ENCODE measurements at regions of chr7 and their contacts with region 1.

Region 1: GRCh38 chr7:144011458-144012230 is 11.5 kb downstream of the OR6B1 start:
- DNase-seq: peak; percentile 10
- H3K4me3 ChIP-seq: no peak overlapping the region
- CTCF ChIP-seq: peak; percentile 15

Region 2: DNA sequence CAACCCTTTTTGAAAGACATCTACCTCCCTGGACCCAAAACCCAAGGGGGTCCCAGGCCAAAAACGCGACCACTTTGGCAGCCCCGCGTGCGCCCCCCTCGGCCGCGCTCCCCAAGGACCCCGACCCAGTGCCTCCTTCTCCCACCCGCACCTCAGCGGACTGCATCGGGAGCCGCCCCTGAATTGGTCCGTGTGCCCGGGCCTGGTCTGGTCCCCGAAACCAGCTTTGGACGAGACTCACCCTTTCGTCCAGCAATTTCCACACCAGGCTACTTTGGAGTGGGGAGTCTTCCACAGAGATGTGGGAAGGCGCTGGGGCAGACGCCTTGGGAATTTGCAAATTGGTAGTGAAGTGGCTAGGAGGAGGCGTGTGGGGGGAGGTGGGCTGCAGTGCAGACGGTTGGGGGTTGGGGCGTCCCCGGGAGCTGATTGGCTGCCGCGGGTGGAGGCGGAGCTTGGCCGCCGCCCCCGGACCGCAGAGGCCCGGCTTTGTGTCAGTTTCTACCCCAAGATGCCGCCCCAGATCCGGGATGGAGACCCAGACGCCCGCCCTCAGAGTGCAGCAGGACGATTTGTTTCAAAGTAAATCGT is 126.6 kb before region 1 on chr7:
- CTCF ChIA-PET with region 1: interaction called, 11 read pairs
- POLR2A ChIA-PET with region 1: no interaction called
- DNase-seq: no peak
- H3K4me3 ChIP-seq: peak overlapping the region; percentile 86
- CTCF ChIP-seq: no peak

Region 3: DNA sequence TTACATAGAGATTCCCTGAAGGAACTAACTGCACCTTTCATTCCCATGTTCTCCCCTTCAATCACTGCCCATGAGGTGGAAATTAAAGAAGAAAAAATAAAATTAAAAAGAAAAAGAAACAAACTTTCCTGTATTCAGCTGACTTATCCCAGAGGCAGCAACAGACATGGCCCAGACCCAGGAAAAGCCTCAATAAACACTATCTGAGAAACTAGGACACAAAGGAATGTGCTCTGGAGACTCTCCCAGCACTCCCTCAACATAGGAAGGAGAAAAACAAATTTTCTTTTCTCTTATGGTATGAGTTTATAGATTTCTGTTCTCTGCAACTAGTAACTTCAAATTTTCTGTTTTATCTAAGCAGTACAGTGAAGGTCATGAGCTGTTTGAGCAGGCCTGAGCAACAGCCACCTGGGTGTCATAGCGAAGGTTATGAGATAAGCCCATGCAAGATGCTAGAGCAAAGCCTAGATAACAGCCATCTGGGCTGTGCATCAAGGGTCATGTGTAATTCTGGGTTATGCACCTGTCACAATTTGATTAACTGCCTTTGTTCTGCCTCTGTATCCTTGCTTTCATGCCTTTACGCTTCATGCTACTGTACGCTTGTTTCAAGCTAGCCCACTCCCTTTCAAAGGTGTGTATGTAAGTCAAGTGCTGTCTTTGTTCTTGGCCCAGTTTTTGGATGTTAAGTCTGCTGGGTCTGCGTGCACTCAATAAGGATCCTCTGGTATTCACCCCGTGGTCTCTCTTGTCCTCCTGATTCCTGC is 22.5 kb before region 1 on chr7:
- CTCF ChIA-PET with region 1: no interaction called
- POLR2A ChIA-PET with region 1: no interaction called
- DNase-seq: no peak
- H3K4me3 ChIP-seq: no peak overlapping the region
- CTCF ChIP-seq: no peak

Region 4: DNA sequence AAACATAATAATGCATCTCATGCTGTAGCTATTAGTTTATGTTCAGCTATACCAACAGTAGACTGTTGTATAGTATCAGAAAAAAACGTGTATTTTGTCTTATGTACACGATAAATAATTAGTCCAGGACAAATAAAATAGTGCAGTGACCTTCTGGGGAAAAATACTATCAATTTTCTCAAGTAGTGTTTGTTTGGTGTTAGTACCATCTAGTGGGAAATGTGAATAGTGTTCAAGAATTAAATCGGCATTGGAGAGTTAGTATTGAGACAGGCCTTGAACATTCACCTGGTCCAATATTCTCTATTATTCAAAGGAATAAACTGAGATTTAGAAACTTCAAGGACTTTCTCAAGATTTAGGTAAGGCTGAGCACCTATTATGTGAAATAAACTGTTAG is 15.4 kb after region 1 on chr7:
- CTCF ChIA-PET with region 1: interaction called, 10 read pairs
- POLR2A ChIA-PET with region 1: no interaction called
- DNase-seq: no peak
- H3K4me3 ChIP-seq: no peak overlapping the region
- CTCF ChIP-seq: peak; percentile 22

Region 5: GRCh38 chr7:144050093-144050492 is 38.4 kb after region 1 on chr7:
- CTCF ChIA-PET with region 1: no interaction called
- POLR2A ChIA-PET with region 1: no interaction called
- DNase-seq: no peak
- H3K4me3 ChIP-seq: no peak overlapping the region
- CTCF ChIP-seq: no peak

Region 6: GRCh38 chr7:144086730-144087129 is 75.1 kb after region 1 on chr7:
- CTCF ChIA-PET with region 1: no interaction called
- POLR2A ChIA-PET with region 1: no interaction called
- DNase-seq: no peak
- H3K4me3 ChIP-seq: no peak overlapping the region
- CTCF ChIP-seq: no peak

Measured in AG04449 (cell line).